ENCODE measurements at regions of chr11 and their contacts with region 1.

Region 1: DNA sequence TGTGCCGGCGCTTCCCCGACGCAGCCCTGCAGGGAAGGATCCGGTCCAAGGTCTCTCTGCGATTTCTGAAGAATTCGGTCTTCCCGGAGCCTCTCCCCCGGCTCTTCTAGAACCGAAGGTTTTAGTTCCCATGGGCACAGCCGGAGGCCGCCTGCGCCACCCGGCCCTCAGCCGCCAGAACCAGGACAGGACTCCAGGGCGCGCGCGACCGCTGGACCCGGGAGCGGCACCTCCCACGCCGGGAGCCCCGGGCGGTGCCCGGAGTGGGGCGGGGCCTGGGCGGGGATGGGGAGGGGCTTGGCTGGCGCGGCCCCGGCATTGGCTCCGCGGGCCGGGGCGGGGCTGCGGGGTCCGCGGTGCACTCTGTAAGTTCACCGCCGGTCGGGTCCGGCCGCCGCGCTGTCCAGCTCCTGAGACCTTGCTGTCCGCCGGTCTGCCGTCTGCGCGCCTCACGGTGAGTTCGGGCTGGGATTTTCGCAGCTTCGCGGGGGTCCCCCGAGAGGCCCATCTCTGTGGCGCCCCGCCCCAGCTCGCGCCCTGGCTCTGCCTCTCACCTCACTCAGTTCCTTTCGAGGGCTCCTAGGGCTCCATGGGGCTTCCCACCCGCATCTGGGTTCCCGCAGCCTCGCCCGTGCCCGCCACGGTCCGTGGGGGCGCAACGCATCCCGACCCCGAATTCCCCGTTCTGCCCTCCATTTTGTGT is at the start of gene CDC42EP2:
- DNase-seq: peak; percentile 58 to 94
- H3K4me3 ChIP-seq: peak within 1 kb of the TSS; percentile 79 to 86
- H3K27ac ChIP-seq: peak within 1 kb of the TSS; percentile 80 to 83
- H3K4me1 ChIP-seq: peaks cover 0 to 20% of the 10 kb centered on the region in 2 donors
- H3K27me3 ChIP-seq: no peaks in the 10 kb centered on the region
- CTCF ChIP-seq: no peak
- total RNA-seq, gene CDC42EP2: 20.6 TPM

Region 2: GRCh38 chr11:65134386-65135253 is 180.0 kb before region 1 on chr11 and contains the start of gene SYVN1:
- intact Hi-C with region 1: loop called (anchors 5 kb)
- DNase-seq: peak; percentile 91 to 97
- H3K4me3 ChIP-seq: peak within 1 kb of the TSS; percentile 89 to 99
- H3K27ac ChIP-seq: peak within 1 kb of the TSS; percentile 95 to 99
- H3K4me1 ChIP-seq: peaks cover 11 to 24% of the 10 kb centered on the region in 2 donors
- H3K27me3 ChIP-seq: no peaks in the 10 kb centered on the region
- CTCF ChIP-seq: no peak
- total RNA-seq, gene SYVN1: 229 TPM

Region 3: GRCh38 chr11:65225279-65226102 is 89.2 kb before region 1 on chr11:
- intact Hi-C with region 1: loop called (anchors 2 kb)
- DNase-seq: peak in 1 of 2 donors; percentile 77
- H3K4me3 ChIP-seq: peak overlapping the region; percentile 60
- H3K27ac ChIP-seq: peak overlapping the region in 1 of 2 donors; percentile 40
- H3K4me1 ChIP-seq: peaks cover 0 to 12% of the 10 kb centered on the region in 2 donors
- H3K27me3 ChIP-seq: no peaks in the 10 kb centered on the region
- CTCF ChIP-seq: peak; percentile 41 to 50 (median 41)

Region 4: DNA sequence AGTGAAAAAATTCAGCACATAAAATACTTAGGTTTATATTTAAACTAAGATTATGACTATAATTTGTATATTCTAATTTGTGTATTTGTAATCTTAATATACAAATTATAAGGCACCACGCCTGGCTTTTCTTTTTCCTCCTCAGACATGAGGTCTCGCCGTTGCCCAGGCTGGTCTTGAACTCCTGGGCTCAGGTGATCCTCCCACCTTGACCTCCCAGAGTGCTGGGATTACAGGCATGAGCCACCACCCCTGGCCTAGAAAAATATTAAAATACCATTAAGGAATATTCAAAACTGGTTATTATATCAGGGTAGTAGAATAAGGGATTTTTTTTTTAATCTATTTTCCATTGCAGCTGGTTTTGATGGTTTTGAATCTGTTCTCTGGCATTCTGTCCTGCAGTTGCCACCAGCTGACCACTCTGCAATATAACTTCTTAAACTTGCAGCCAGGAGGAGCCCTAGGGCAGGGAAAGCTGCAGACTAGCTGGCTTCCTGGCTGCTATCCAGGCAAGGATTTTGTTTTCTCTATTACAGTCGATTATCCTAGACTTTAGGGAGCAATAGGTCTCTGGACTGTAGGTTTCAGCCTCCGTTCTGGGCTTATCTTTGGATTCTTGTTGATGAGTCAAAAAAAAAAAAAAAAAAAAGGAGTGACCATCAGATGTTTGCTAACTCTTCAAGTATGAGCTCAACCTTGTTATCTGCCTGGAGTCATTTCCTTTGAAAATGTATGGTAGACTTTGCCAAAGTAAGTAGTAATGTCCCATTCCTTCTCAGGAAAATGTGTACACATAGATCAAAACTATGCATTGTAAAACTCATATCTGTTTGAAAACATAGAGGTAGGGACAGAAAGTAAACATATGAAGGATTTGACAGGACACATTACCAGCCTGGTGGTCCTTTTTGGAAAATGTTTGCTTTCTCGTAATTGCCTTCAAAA is 39.6 kb before region 1 on chr11:
- intact Hi-C with region 1: loop called (anchors 1 kb)
- DNase-seq: peak in 1 of 2 donors; percentile 88
- H3K4me3 ChIP-seq: no peak overlapping the region
- H3K27ac ChIP-seq: peak overlapping the region; percentile 58 to 61
- H3K4me1 ChIP-seq: peaks cover 0 to 12% of the 10 kb centered on the region in 2 donors
- H3K27me3 ChIP-seq: no peaks in the 10 kb centered on the region
- CTCF ChIP-seq: peak; percentile 64 to 91 (median 85)

Region 5: GRCh38 chr11:65329944-65330403 is 15.3 kb after region 1 on chr11:
- intact Hi-C with region 1: loop called (anchors 1 kb)
- DNase-seq: peak in 1 of 2 donors; percentile 94
- H3K4me3 ChIP-seq: no peak overlapping the region
- H3K27ac ChIP-seq: no peak overlapping the region
- H3K4me1 ChIP-seq: peaks cover 0 to 13% of the 10 kb centered on the region in 2 donors
- H3K27me3 ChIP-seq: no peaks in the 10 kb centered on the region
- CTCF ChIP-seq: peak; percentile 66 to 73 (median 67)

Measured in ascending aorta (tissue), 2 donors.